Activated naive CD4-positive, alpha-beta T cell treated with anti-CD3 and anti-CD28 coated beads for 36 hours (primary cell): ENCODE measurements at regions of chr3 and their contacts with region 1.

Region 1: DNA sequence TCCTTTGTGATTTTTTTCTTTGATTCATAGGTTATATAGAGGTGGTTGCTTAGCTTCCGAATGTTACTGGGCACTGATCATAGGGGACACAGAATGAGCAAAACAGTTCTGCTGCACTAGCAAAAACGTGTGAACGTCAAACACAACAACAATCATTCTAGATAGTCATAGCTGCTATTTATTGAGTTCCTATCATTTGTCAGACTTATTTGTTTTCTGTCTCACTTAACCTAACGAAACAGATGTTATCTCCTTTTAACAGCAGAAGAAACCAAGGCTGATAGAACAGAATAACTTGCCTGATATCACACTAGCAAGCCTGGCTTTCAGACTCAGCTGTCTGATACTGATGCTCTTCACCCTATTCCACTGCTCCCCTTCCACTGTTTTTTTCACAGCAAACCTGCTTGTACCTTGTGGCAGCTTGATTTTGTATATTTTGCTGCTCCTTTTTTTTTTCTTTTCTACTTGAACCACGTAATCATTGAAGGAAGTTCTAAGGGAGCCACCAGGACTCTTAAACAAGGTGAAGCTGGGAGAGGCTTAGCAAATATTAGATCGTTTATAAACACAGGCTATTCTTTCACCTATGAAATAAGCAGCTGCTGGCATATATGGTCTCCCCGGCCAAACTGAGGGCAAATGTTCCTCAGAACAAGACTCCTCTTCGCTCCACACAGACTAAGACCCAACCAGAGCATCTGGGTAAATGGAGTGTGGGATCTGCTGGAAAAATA is 78.8 kb downstream of the MCF2L2 start:
- DNase-seq: no peak
- H3K4me3 Mint-ChIP-seq: no peak overlapping the region
- H3K27ac Mint-ChIP-seq: no peak overlapping the region
- H3K4me1 Mint-ChIP-seq: peaks cover 21% of the 10 kb centered on the region
- H3K27me3 Mint-ChIP-seq: peaks cover 2% of the 10 kb centered on the region

Region 2: DNA sequence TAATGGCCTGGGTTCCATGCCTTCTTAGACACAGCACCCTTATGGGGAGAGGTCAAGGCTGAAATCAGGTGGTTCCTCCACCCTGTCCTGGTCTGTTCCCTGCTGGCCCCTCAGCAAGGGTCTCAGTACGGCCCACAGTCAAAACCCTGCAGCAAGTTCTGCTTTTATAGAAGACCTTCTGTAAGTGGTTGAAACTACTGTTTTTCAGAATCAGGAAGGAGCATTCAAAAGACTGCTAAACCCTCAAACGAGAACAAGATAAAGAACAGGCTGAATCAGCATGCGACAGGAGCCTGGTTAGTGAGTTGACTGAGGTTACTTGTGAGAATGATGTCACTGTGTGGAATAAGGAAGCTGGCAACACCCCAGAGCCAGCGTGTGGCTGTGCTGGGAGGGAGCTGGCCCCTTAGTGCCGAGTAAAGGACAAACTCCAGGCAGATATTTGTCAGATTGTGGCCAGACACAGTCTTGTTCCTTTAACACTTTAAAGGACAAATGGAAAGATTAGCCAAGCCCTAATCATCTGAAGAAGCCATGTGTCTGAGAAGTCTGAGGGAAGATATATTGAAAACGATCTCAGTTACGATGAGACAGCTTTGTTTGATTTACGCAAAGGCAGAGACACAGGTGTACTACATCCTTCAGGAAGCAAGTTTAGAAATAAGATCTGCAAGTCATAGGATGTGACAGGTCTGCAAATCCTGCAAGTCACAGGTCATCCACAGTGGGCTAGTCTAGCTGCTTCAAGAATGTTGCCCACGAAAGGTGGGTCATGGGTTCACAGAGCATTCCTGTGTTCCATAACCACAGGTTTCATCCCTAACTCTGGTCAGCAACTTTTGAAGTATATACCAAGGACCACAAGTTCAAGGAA is 42.6 kb before region 1 on chr3:
- CTCF ChIA-PET with region 1: interaction called, 3 read pairs
- intact Hi-C with region 1: loop called (anchors 2 kb)
- DNase-seq: peak; percentile 71
- H3K4me3 Mint-ChIP-seq: peak overlapping the region; percentile 19
- H3K27ac Mint-ChIP-seq: peak overlapping the region; percentile 48
- H3K4me1 Mint-ChIP-seq: peaks cover 20% of the 10 kb centered on the region
- H3K27me3 Mint-ChIP-seq: no peaks in the 10 kb centered on the region

Region 3: GRCh38 chr3:183317886-183318865 is 31.4 kb before region 1 on chr3:
- CTCF ChIA-PET with region 1: no interaction called
- intact Hi-C with region 1: loop called (anchors 2 kb)
- DNase-seq: no peak
- H3K4me3 Mint-ChIP-seq: no peak overlapping the region
- H3K27ac Mint-ChIP-seq: no peak overlapping the region
- H3K4me1 Mint-ChIP-seq: peaks cover 16% of the 10 kb centered on the region
- H3K27me3 Mint-ChIP-seq: peaks cover 3% of the 10 kb centered on the region

Region 4: GRCh38 chr3:183369117-183369516 is 19.5 kb after region 1 on chr3:
- CTCF ChIA-PET with region 1: no interaction called
- intact Hi-C with region 1: loop called (anchors 2 kb)
- DNase-seq: no peak
- H3K4me3 Mint-ChIP-seq: no peak overlapping the region
- H3K27ac Mint-ChIP-seq: no peak overlapping the region
- H3K4me1 Mint-ChIP-seq: peaks cover 36% of the 10 kb centered on the region
- H3K27me3 Mint-ChIP-seq: no peaks in the 10 kb centered on the region

Region 5: DNA sequence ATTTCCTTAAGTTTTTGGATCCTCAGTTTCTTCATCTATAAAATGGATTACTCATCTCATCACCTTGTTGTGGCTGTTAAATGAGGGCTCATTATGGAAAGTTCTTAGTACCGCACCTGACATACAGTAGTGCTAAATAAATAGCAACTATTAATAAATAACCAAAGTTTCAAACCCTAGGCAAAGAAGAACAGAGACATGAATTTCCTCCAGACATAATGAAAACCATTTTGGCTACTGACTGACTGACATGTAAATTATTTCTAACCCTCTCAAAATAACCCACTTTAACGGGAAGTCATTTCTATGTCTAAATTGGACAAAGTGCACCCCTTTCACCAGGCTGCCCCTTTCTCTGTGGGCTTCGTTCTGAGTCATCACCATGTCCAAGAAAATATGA is 223.3 kb after region 1 on chr3:
- CTCF ChIA-PET with region 1: no interaction called
- intact Hi-C with region 1: no loop called
- DNase-seq: no peak
- H3K4me3 Mint-ChIP-seq: no peak overlapping the region
- H3K27ac Mint-ChIP-seq: no peak overlapping the region
- H3K4me1 Mint-ChIP-seq: peaks cover 9% of the 10 kb centered on the region
- H3K27me3 Mint-ChIP-seq: no peaks in the 10 kb centered on the region